Caco-2 (cell line): ENCODE measurements at regions of chr19 and their contacts with region 1.

Region 1: GRCh38 chr19:41175801-41176777 is 16.9 kb upstream of the CYP2S1 start:
- DNase-seq: peak; percentile 96 to 97
- H3K4me3 ChIP-seq: peak overlapping the region; percentile 39
- H3K4me3 Mint-ChIP-seq: peak overlapping the region; percentile 87
- H3K27ac Mint-ChIP-seq: peak overlapping the region; percentile 96
- H3K4me1 ChIP-seq: peaks cover 36% of the 10 kb centered on the region
- H3K4me1 Mint-ChIP-seq: peaks cover 40% of the 10 kb centered on the region
- H3K27me3 ChIP-seq: no peaks in the 10 kb centered on the region
- H3K27me3 Mint-ChIP-seq: no peaks in the 10 kb centered on the region
- CTCF ChIP-seq: no peak

Region 2: DNA sequence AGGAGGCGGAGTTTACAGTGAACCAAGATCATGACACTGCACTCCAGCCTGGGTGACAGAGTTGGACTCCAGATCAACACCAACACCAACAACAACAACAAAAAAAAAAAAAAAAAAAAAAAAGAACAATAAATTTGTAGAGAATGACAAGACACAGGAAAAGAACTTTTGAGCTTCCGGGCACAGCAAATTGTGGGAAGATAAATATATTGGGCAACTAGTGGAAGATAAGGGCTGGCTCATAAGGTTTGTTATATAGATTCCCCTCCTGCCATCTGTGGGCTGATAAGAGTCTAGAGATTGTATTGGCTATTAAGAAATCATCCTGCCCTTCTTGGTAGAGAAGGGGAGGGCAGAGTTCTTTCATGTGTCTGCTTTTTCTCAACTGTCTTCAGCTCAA is 16.2 kb before region 1 on chr19:
- CTCF ChIA-PET with region 1: interaction called, 5 read pairs
- POLR2A ChIA-PET with region 1: interaction called, 19 read pairs
- intact Hi-C with region 1: loop called (anchors 1 kb)
- DNase-seq: no peak
- H3K4me3 ChIP-seq: no peak overlapping the region
- H3K4me3 Mint-ChIP-seq: no peak overlapping the region
- H3K27ac Mint-ChIP-seq: peak overlapping the region; percentile 91
- H3K4me1 ChIP-seq: peaks cover 30% of the 10 kb centered on the region
- H3K4me1 Mint-ChIP-seq: peaks cover 28% of the 10 kb centered on the region
- H3K27me3 ChIP-seq: no peaks in the 10 kb centered on the region
- H3K27me3 Mint-ChIP-seq: no peaks in the 10 kb centered on the region
- CTCF ChIP-seq: no peak

Region 3: GRCh38 chr19:41192574-41193429 is 16.7 kb after region 1 on chr19 and contains the start of gene CYP2S1:
- CTCF ChIA-PET with region 1: no interaction called
- POLR2A ChIA-PET with region 1: interaction called, 3 read pairs
- intact Hi-C with region 1: loop called (anchors 1 kb)
- DNase-seq: peak; percentile 85 to 90
- H3K4me3 ChIP-seq: peak within 1 kb of the TSS; percentile 85
- H3K4me3 Mint-ChIP-seq: peak within 1 kb of the TSS; percentile 76
- H3K27ac Mint-ChIP-seq: peak within 1 kb of the TSS; percentile 43
- H3K4me1 ChIP-seq: peaks cover 23% of the 10 kb centered on the region
- H3K4me1 Mint-ChIP-seq: peaks cover 25% of the 10 kb centered on the region
- H3K27me3 ChIP-seq: no peaks in the 10 kb centered on the region
- H3K27me3 Mint-ChIP-seq: no peaks in the 10 kb centered on the region
- CTCF ChIP-seq: no peak
- total RNA-seq, gene CYP2S1: 56.0 and 63.0 TPM in 2 replicates

Region 4: DNA sequence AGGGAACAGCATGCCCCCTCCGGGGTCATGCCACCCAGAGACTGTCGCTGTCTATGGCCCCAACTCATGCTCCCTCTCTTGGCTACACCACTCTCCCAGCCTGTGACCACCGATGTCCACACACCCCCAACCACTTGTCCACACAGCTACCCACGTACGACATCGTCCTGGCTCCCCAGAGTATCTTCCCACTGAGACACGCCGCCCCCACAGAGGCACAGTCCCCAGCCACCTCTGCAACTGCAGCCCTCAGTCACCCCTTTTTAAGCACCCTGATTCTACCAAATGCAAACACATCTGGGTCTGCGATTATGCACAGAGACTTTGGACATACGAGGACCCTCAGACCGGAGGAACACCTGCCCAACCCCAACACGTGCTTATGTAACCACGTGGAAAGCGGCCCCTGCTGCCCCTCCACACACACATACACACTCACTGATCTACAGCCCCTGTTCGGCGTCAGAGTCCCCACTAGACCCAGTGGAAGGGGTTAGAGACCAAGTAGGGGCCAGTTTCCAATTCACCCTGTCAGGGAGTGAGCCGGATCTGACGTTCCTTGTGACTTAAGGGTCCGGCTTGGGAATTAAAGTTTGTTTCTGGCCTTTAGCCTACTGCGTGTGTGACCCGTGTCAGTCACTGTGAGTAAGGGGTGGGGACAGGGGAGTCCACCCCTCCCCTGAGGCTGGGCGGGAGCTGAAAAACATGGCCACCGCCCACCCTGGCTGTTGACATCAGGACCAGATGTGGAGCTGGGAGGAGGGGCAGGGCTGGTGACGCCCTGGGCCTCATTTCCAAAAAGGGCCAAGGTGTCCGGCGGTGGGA is 31.0 kb after region 1 on chr19:
- CTCF ChIA-PET with region 1: interaction called, 3 read pairs
- POLR2A ChIA-PET with region 1: no interaction called
- intact Hi-C with region 1: loop called (anchors 1 kb)
- DNase-seq: no peak
- H3K4me3 ChIP-seq: no peak overlapping the region
- H3K4me3 Mint-ChIP-seq: no peak overlapping the region
- H3K27ac Mint-ChIP-seq: no peak overlapping the region
- H3K4me1 ChIP-seq: no peaks in the 10 kb centered on the region
- H3K4me1 Mint-ChIP-seq: peaks cover 6% of the 10 kb centered on the region
- H3K27me3 ChIP-seq: no peaks in the 10 kb centered on the region
- H3K27me3 Mint-ChIP-seq: no peaks in the 10 kb centered on the region
- CTCF ChIP-seq: no peak

Region 5: DNA sequence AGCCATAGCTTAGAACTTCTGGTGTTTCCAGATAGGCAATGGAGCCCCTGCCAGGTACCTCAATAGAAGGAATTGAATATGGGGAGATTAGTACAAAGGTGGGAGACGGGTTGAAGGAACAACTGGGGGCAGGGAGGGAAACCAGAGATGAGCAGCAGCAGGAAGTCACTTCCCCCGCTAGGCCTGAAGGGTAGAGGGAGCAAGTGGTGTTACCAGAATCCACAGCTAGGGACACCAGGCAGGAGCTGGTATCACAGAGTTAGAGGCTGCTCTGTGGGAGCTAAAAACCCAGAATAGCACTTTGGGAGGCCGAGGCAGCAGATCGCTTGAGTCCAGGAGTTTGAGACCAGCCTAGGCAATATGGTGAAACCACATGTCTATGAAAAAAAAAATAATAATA is 72.8 kb after region 1 on chr19:
- CTCF ChIA-PET with region 1: no interaction called
- POLR2A ChIA-PET with region 1: no interaction called
- intact Hi-C with region 1: no loop called
- DNase-seq: no peak
- H3K4me3 ChIP-seq: no peak overlapping the region
- H3K4me3 Mint-ChIP-seq: no peak overlapping the region
- H3K27ac Mint-ChIP-seq: no peak overlapping the region
- H3K4me1 ChIP-seq: peaks cover 11% of the 10 kb centered on the region
- H3K4me1 Mint-ChIP-seq: peaks cover 6% of the 10 kb centered on the region
- H3K27me3 ChIP-seq: no peaks in the 10 kb centered on the region
- H3K27me3 Mint-ChIP-seq: no peaks in the 10 kb centered on the region
- CTCF ChIP-seq: no peak